Left ventricle myocardium inferior (tissue), 1 donor: ENCODE measurements at regions of chr6 and their contacts with region 1.

Region 1: GRCh38 chr6:36682328-36683144 is 4.0 kb downstream of the CDKN1A start:
- DNase-seq: peak; percentile 52
- H3K4me3 ChIP-seq: peak overlapping the region; percentile 24
- H3K27ac ChIP-seq: peak overlapping the region; percentile 58
- H3K4me1 ChIP-seq: peaks cover 80% of the 10 kb centered on the region
- H3K27me3 ChIP-seq: no peaks in the 10 kb centered on the region
- CTCF ChIP-seq: no peak

Region 2: GRCh38 chr6:36373368-36374019 is 309.0 kb before region 1 on chr6:
- intact Hi-C with region 1: no loop called
- DNase-seq: no peak
- H3K4me3 ChIP-seq: no peak overlapping the region
- H3K27ac ChIP-seq: no peak overlapping the region
- H3K4me1 ChIP-seq: no peaks in the 10 kb centered on the region
- H3K27me3 ChIP-seq: peaks cover 31% of the 10 kb centered on the region
- CTCF ChIP-seq: no peak

Region 3: DNA sequence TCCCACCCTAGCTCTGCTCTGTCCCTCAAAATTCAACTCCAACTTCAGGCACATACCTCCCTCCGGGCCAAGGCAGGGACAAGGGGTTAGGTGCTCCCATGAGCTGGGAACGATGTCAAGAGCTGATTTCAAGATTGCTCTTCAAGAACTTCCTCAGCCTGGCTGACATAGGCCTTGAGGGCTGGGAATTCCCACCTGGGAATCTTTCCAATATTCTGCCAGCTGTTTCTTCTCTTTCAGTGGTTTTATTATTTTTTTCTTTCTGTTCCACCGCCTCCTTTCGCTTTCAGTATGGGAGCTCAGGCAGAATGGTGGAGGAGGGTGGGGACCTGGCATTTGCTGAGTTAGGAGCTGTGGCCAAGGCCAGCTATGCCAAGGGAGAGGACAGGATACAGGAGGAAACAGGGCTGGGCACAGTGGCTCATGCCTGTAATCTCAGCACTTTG is 54.7 kb before region 1 on chr6:
- intact Hi-C with region 1: loop called (anchors 5 kb)
- DNase-seq: peak; percentile 50
- H3K4me3 ChIP-seq: no peak overlapping the region
- H3K27ac ChIP-seq: peak overlapping the region; percentile 71
- H3K4me1 ChIP-seq: peaks cover 61% of the 10 kb centered on the region
- H3K27me3 ChIP-seq: no peaks in the 10 kb centered on the region
- CTCF ChIP-seq: no peak

Region 4: GRCh38 chr6:36759148-36759759 is 76.7 kb after region 1 on chr6:
- intact Hi-C with region 1: loop called (anchors 10 kb)
- DNase-seq: peak; percentile 77
- H3K4me3 ChIP-seq: no peak overlapping the region
- H3K27ac ChIP-seq: no peak overlapping the region
- H3K4me1 ChIP-seq: peaks cover 27% of the 10 kb centered on the region
- H3K27me3 ChIP-seq: no peaks in the 10 kb centered on the region
- CTCF ChIP-seq: peak; percentile 97

Region 5: DNA sequence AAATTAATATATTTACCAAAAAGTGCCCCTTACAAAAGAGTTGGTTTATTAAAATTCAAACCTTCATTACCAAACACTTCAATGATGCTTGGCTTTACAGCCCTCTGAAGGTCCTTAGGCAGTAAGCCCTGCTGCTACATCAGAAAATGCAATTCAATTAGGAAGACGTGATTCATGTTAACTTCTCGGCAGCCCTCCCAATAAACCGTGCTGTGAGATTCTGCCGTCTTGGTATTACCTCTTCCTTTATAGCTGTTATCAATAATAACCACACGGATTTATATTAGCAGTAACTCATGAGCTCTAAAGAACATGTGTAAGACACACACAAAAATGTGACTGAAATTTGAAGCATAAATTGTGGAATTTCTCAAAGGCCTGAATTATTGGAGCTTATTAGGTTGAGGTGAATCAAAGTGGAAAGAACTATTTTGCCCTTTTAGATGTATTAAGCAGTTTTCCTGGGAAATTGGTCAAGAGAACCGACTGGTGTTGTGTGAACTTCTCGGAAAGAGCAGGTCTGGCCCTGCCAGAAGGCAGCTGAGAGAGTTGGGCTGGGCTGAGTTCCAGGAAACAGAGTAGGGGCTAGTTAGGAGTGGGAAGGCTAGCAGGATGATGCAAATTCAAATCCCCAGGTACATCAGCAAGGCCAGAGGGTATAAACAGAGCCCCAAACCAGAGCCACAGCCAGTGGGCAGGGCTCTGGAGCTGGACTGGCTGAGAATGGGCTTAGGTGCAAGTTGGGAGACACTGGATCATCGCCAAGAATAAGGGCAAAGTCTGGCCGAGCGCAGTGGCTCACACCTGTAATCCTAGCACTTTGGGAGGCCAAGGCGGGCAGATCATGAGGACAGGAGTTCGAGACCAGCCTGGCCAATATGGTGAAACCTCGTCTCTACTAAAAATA is 356.0 kb after region 1 on chr6:
- intact Hi-C with region 1: no loop called
- DNase-seq: peak; percentile 64
- H3K4me3 ChIP-seq: no peak overlapping the region
- H3K27ac ChIP-seq: peak overlapping the region; percentile 36
- H3K4me1 ChIP-seq: peaks cover 3% of the 10 kb centered on the region
- H3K27me3 ChIP-seq: no peaks in the 10 kb centered on the region
- CTCF ChIP-seq: no peak